ENCODE measurements at regions of chr7 and their contacts with region 1.

Region 1: DNA sequence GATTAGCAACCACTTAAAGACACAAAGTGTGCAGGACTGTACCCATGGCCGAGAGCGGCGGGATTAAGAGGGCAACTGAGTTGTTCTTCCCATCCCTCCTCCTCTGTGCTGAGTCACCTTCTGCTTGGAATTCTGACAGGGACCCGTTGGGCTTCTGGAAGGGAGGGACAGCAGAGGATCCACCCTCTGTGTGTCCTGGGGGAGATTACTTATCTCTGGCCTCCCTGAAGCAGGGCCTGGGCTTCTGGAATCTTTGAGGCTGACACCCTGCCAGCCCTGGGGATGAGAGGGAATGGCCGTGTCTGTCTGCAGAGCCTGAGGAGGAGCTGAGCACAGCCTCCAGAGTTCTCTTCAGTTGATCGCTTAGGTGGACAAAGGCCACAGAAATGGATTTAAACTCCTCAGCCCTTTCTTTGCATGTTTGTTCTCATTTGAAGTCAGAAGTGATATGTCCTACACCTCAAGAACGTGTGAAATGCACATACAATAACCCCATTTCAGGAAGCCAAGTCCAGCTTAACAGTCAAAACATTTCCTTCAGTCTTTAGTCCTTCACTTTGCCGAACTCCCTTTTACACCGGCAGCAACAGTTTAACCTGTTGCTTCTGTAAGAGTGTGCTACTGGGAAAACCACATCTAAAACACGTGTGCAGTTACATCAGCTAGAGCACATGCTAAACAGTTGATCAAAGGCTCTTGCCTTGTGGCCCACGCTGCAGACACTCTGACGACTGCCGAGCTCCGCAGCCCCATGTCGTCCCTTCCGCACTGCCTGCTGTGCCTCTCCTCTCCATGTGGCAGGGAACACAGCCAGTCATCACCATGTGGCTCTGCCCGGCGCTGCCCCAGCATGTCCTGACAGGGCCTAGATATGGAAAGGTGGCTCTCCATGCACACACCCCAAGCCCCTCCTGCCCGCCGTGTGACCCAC is 55.7 kb downstream of the IKZF1 start:
- DNase-seq: peak; percentile 50 to 95
- ATAC-seq: peak; percentile 58 to 77 (median 73)
- H3K4me3 ChIP-seq: no peak overlapping the region
- H3K4me3 Mint-ChIP-seq: peak overlapping the region; percentile 65
- H3K27ac ChIP-seq: peak overlapping the region; percentile 91
- H3K27ac Mint-ChIP-seq: no peak overlapping the region
- H3K4me1 ChIP-seq: peaks cover 93% of the 10 kb centered on the region
- H3K4me1 Mint-ChIP-seq: peaks cover 90 to 95% of the 10 kb centered on the region in 2 donors
- H3K27me3 ChIP-seq: no peaks in the 10 kb centered on the region
- H3K27me3 Mint-ChIP-seq: no peaks in the 10 kb centered on the region
- CTCF ChIP-seq: no peak

Region 2: DNA sequence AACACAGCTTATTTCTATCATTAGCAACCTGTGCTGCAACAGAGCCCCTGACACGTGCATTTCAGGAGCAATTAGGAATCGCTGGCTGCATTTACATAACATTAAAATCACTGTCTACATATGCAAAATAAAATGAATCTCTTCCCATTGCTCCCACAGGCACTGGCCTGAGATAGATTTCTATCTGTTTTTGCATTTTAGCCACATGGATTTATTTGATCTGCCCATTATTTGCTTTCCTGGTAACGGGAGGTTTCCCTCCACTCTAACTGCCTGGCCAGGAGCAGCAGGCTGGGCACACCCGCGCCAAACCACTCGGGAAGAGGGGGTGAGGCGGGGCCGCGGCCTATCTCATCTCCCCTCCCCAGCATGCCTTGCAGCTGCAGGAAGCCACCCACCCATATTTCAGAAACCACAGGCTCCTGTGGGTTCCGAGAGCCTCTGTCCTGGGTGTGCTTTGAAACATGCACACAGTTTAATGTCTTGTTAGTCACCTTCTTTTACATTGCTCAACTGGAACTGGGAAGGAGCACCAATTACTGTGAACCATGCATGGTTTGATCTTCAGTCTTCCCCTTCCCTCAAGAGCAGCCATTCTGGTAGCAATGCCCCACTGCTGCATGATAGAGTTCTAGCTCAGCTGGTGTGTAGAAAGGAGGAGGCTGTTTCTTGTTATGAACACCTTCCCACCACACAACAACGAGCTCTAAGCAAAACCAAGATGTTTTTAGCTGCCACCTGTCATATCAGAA is 93.4 kb before region 1 on chr7:
- intact Hi-C with region 1: loop called (anchors 5 kb)
- DNase-seq: peak; percentile 48 to 84
- ATAC-seq: peak; percentile 48 to 72 (median 70)
- H3K4me3 ChIP-seq: no peak overlapping the region
- H3K4me3 Mint-ChIP-seq: peak overlapping the region; percentile 94
- H3K27ac ChIP-seq: peak overlapping the region; percentile 71
- H3K27ac Mint-ChIP-seq: peak overlapping the region; percentile 89 to 97
- H3K4me1 ChIP-seq: peaks cover 79% of the 10 kb centered on the region
- H3K4me1 Mint-ChIP-seq: peaks cover 83 to 85% of the 10 kb centered on the region in 2 donors
- H3K27me3 ChIP-seq: no peaks in the 10 kb centered on the region
- H3K27me3 Mint-ChIP-seq: no peaks in the 10 kb centered on the region
- CTCF ChIP-seq: no peak

Region 3: GRCh38 chr7:50307368-50308032 is 52.8 kb before region 1 on chr7:
- intact Hi-C with region 1: loop called (anchors 1 kb)
- DNase-seq: peak; percentile 48 to 87
- ATAC-seq: peak; percentile 39 to 63 (median 54)
- H3K4me3 ChIP-seq: peak overlapping the region; percentile 96
- H3K4me3 Mint-ChIP-seq: peak overlapping the region; percentile 99
- H3K27ac ChIP-seq: peak overlapping the region; percentile 93
- H3K27ac Mint-ChIP-seq: peak overlapping the region in 1 of 2 donors; percentile 98
- H3K4me1 ChIP-seq: peaks cover 33% of the 10 kb centered on the region
- H3K4me1 Mint-ChIP-seq: peaks cover 66 to 75% of the 10 kb centered on the region in 2 donors
- H3K27me3 ChIP-seq: no peaks in the 10 kb centered on the region
- H3K27me3 Mint-ChIP-seq: no peaks in the 10 kb centered on the region
- CTCF ChIP-seq: no peak

Region 4: GRCh38 chr7:50335795-50336754 is 24.2 kb before region 1 on chr7:
- intact Hi-C with region 1: loop called (anchors 2 kb)
- DNase-seq: peak; percentile 74 to 87
- ATAC-seq: peak; percentile 74 to 82 (median 74)
- H3K4me3 ChIP-seq: no peak overlapping the region
- H3K4me3 Mint-ChIP-seq: no peak overlapping the region
- H3K27ac ChIP-seq: peak overlapping the region; percentile 91
- H3K27ac Mint-ChIP-seq: no peak overlapping the region
- H3K4me1 ChIP-seq: peaks cover 92% of the 10 kb centered on the region
- H3K4me1 Mint-ChIP-seq: peaks cover 19 to 39% of the 10 kb centered on the region in 2 donors
- H3K27me3 ChIP-seq: no peaks in the 10 kb centered on the region
- H3K27me3 Mint-ChIP-seq: no peaks in the 10 kb centered on the region
- CTCF ChIP-seq: no peak

Region 5: GRCh38 chr7:50349963-50350944 is 10.0 kb before region 1 on chr7:
- intact Hi-C with region 1: loop called (anchors 1 kb)
- DNase-seq: peak; percentile 65 to 79
- ATAC-seq: peak; percentile 58 to 78 (median 70)
- H3K4me3 ChIP-seq: no peak overlapping the region
- H3K4me3 Mint-ChIP-seq: peak overlapping the region; percentile 80
- H3K27ac ChIP-seq: peak overlapping the region; percentile 95
- H3K27ac Mint-ChIP-seq: no peak overlapping the region
- H3K4me1 ChIP-seq: peaks cover 79% of the 10 kb centered on the region
- H3K4me1 Mint-ChIP-seq: peaks cover 94 to 98% of the 10 kb centered on the region in 2 donors
- H3K27me3 ChIP-seq: no peaks in the 10 kb centered on the region
- H3K27me3 Mint-ChIP-seq: no peaks in the 10 kb centered on the region
- CTCF ChIP-seq: no peak

Region 6: GRCh38 chr7:50397320-50397970 is 37.2 kb after region 1 on chr7:
- intact Hi-C with region 1: loop called (anchors 5 kb)
- DNase-seq: peak in 1 of 2 donors; percentile 81
- ATAC-seq: peak; percentile 56 to 74 (median 60)
- H3K4me3 ChIP-seq: no peak overlapping the region
- H3K4me3 Mint-ChIP-seq: peak overlapping the region; percentile 75
- H3K27ac ChIP-seq: peak overlapping the region; percentile 78
- H3K27ac Mint-ChIP-seq: peak overlapping the region; percentile 82 to 95
- H3K4me1 ChIP-seq: peaks cover 40% of the 10 kb centered on the region
- H3K4me1 Mint-ChIP-seq: peaks cover 60 to 67% of the 10 kb centered on the region in 2 donors
- H3K27me3 ChIP-seq: no peaks in the 10 kb centered on the region
- H3K27me3 Mint-ChIP-seq: no peaks in the 10 kb centered on the region
- CTCF ChIP-seq: no peak

Measured in natural killer cell (primary cell).